Vagina (tissue), 2 donors: ENCODE measurements at regions of chr13 and their contacts with region 1.

Region 1: DNA sequence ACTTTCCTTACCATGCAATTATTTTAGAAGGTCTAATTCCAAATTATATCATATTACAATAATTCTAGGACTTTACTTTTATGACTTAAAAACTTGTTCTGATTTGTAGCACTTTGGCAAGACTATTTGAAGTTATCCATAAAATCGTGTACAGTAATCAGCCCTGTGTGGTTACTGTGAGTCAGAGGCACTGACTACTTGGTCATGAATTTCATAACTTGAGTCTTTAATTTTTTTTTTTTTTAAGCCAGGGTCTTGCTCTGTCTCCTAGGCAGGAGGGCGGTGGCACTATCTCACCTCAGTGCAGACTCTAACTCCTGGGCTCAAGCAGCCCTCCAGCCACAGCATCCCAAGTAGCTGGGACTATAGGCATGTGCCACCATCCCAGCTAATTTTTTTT is 1319.2 kb upstream of the SLC10A2 start:
- DNase-seq: no peak
- H3K4me3 ChIP-seq: no peak overlapping the region
- H3K27ac ChIP-seq: no peak overlapping the region
- H3K4me1 ChIP-seq: no peaks in the 10 kb centered on the region
- H3K27me3 ChIP-seq: no peaks in the 10 kb centered on the region
- CTCF ChIP-seq: no peak
- POLR2A ChIP-seq: no peak

Region 2: DNA sequence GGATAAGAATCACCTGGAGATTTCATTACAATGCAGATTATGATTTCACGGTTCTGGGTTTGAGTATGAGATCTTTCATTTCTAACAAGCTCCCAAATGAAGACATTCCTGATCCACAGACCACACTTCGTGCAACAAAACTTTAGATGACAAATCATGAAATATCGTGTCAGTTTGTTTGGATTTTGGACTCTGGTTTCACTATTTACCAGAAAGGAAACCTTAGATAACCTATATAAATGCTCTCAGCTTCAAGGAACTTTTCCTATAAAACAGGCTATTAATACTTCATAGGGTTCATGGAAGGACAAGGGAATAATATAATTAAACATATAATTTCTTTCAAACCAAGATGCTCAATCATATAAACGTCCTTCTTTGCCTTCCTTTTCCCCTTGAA is 388.7 kb before region 1 on chr13:
- intact Hi-C with region 1: loop called (anchors 5 kb)
- DNase-seq: no peak
- H3K4me3 ChIP-seq: no peak overlapping the region
- H3K27ac ChIP-seq: no peak overlapping the region
- H3K4me1 ChIP-seq: no peaks in the 10 kb centered on the region
- H3K27me3 ChIP-seq: no peaks in the 10 kb centered on the region
- CTCF ChIP-seq: no peak
- POLR2A ChIP-seq: no peak